ENCODE measurements at regions of chr3 and their contacts with region 1.

Region 1: DNA sequence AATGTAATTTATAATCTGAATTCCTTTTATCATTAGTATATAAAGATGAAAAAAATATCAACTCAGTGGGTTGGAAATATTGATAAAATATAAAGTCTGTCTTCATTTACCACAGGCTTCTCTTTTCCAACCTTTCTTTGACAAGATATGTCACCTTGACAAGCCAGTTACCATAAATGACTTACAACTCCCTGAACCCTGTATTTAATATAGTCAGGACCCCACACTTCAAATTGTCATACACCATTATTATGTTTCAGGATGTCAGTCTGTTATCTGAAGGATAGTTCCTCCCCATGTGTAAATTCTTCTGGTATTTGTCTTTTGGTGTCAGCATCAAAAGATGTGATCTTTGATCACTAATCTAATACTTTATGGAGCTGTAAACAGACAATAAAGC is 503.4 kb upstream of the BCHE start:
- DNase-seq: peak in 1 of 2 experiments; percentile 35
- H3K4me3 ChIP-seq: no peak overlapping the region
- H3K4me3 Mint-ChIP-seq: no peak overlapping the region
- H3K27ac Mint-ChIP-seq: peak overlapping the region; percentile 81
- H3K4me1 ChIP-seq: peaks cover 26% of the 10 kb centered on the region
- H3K4me1 Mint-ChIP-seq: no peaks in the 10 kb centered on the region
- H3K27me3 ChIP-seq: no peaks in the 10 kb centered on the region
- H3K27me3 Mint-ChIP-seq: no peaks in the 10 kb centered on the region
- CTCF ChIP-seq: no peak

Region 2: DNA sequence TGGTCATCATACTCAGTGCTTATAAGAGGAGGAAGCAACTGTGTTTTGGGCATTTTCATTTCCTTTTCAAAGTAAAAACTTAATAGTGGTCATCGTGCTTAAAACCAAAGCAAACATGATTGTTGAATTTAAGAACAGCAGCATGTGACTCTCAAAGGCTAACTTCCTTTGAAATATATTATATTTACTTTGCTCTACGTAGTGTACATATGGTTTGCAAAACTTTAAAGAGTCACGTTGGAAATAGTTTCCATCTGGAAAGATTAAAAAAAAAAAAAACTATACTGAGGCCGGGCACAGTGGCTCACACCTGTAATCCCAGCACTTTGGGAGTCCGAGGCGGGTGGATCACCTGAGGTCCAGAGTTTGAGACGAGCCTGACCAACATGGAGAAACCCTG is 135.4 kb before region 1 on chr3:
- CTCF ChIA-PET with region 1: no interaction called
- POLR2A ChIA-PET with region 1: no interaction called
- intact Hi-C with region 1: loop called (anchors 1 kb)
- DNase-seq: peak in 1 of 2 experiments; percentile 16
- H3K4me3 ChIP-seq: no peak overlapping the region
- H3K4me3 Mint-ChIP-seq: peak overlapping the region; percentile 19
- H3K27ac Mint-ChIP-seq: no peak overlapping the region
- H3K4me1 ChIP-seq: peaks cover 7% of the 10 kb centered on the region; the same call in 1 of the 2 replicates
- H3K4me1 Mint-ChIP-seq: no peaks in the 10 kb centered on the region
- H3K27me3 ChIP-seq: no peaks in the 10 kb centered on the region
- H3K27me3 Mint-ChIP-seq: no peaks in the 10 kb centered on the region
- CTCF ChIP-seq: no peak

Region 3: DNA sequence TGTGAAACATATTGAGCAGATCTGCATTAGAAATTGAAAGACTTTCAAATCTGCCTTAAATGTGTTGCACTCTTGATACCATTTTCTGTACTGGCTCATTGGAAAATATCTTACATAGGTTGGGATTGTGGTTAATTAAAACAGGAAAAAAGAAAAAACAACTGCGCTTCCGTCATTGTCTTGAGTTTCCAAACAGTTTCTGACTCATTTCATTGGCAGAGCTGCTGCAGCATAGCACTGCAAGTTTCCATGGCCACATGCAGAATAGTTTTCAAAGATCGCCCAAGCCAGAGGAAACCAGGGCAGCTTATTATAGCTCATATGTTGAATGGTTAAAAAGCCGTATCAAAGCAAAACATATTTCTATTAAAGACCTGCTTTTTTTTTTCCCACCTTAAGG is 56.7 kb before region 1 on chr3:
- CTCF ChIA-PET with region 1: no interaction called
- POLR2A ChIA-PET with region 1: no interaction called
- intact Hi-C with region 1: loop called (anchors 2 kb)
- DNase-seq: no peak
- H3K4me3 ChIP-seq: no peak overlapping the region
- H3K4me3 Mint-ChIP-seq: no peak overlapping the region
- H3K27ac Mint-ChIP-seq: no peak overlapping the region
- H3K4me1 ChIP-seq: peaks cover 10% of the 10 kb centered on the region; the same call in 1 of the 2 replicates
- H3K4me1 Mint-ChIP-seq: peaks cover 7% of the 10 kb centered on the region
- H3K27me3 ChIP-seq: no peaks in the 10 kb centered on the region
- H3K27me3 Mint-ChIP-seq: no peaks in the 10 kb centered on the region
- CTCF ChIP-seq: no peak

Region 4: DNA sequence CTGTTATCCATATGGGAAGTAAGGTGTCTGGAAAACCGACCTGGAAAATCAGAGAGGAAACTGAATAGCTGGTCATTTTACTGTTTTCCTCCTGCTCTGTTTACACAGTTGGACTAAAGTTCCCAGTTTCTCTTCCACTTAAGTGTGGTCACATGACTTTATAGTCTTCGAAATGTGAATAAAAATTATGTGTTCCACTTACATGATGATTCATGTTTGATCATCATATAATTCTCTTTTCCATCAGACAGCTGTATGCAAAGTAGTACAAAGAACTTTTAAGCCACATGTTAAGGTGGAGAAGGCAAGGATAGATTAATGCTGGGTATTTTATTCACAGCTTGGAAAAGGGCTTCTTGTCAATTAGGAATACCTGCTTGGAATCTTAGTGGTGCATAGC is 22.1 kb after region 1 on chr3:
- CTCF ChIA-PET with region 1: no interaction called
- POLR2A ChIA-PET with region 1: no interaction called
- intact Hi-C with region 1: no loop called
- DNase-seq: no peak
- H3K4me3 ChIP-seq: no peak overlapping the region
- H3K4me3 Mint-ChIP-seq: no peak overlapping the region
- H3K27ac Mint-ChIP-seq: no peak overlapping the region
- H3K4me1 ChIP-seq: no peaks in the 10 kb centered on the region
- H3K4me1 Mint-ChIP-seq: no peaks in the 10 kb centered on the region
- H3K27me3 ChIP-seq: no peaks in the 10 kb centered on the region
- H3K27me3 Mint-ChIP-seq: no peaks in the 10 kb centered on the region
- CTCF ChIP-seq: no peak

Region 5: GRCh38 chr3:166446291-166446690 is 105.7 kb after region 1 on chr3:
- CTCF ChIA-PET with region 1: no interaction called
- POLR2A ChIA-PET with region 1: no interaction called
- intact Hi-C with region 1: loop called (anchors 2 kb)
- DNase-seq: no peak
- H3K4me3 ChIP-seq: no peak overlapping the region
- H3K4me3 Mint-ChIP-seq: no peak overlapping the region
- H3K27ac Mint-ChIP-seq: no peak overlapping the region
- H3K4me1 ChIP-seq: peaks cover 15% of the 10 kb centered on the region; the same call in 1 of the 2 replicates
- H3K4me1 Mint-ChIP-seq: peaks cover 8% of the 10 kb centered on the region
- H3K27me3 ChIP-seq: no peaks in the 10 kb centered on the region
- H3K27me3 Mint-ChIP-seq: no peaks in the 10 kb centered on the region
- CTCF ChIP-seq: no peak

Region 6: GRCh38 chr3:166663194-166663593 is 322.6 kb after region 1 on chr3:
- CTCF ChIA-PET with region 1: no interaction called
- POLR2A ChIA-PET with region 1: no interaction called
- intact Hi-C with region 1: no loop called
- DNase-seq: no peak
- H3K4me3 ChIP-seq: no peak overlapping the region
- H3K4me3 Mint-ChIP-seq: no peak overlapping the region
- H3K27ac Mint-ChIP-seq: no peak overlapping the region
- H3K4me1 ChIP-seq: no peaks in the 10 kb centered on the region
- H3K4me1 Mint-ChIP-seq: no peaks in the 10 kb centered on the region
- H3K27me3 ChIP-seq: no peaks in the 10 kb centered on the region
- H3K27me3 Mint-ChIP-seq: no peaks in the 10 kb centered on the region
- CTCF ChIP-seq: no peak

Measured in Caco-2 (cell line).